Activated CD8-positive, alpha-beta T cell treated with anti-CD3 and anti-CD28 coated beads, Interleukin-2, amount 10 ng/mL, durations not matched to agents 7 days and 5 days (primary cell): ENCODE measurements at regions of chr1 and their contacts with region 1.

Region 1: GRCh38 chr1:40078512-40079333 is 18.3 kb downstream of the PPT1 start:
- DNase-seq: peak; percentile 75
- ATAC-seq: peak; percentile 83
- H3K4me3 Mint-ChIP-seq: no peak overlapping the region
- H3K27ac Mint-ChIP-seq: no peak overlapping the region
- H3K4me1 Mint-ChIP-seq: peaks cover 2% of the 10 kb centered on the region
- H3K27me3 Mint-ChIP-seq: no peaks in the 10 kb centered on the region

Region 2: GRCh38 chr1:40059338-40059959 is 19.3 kb before region 1 on chr1:
- CTCF ChIA-PET with region 1: interaction called, 32 read pairs
- POLR2A ChIA-PET with region 1: interaction called, 10 read pairs
- DNase-seq: peak; percentile 61
- ATAC-seq: peak; percentile 76
- H3K4me3 Mint-ChIP-seq: peak overlapping the region; percentile 67
- H3K27ac Mint-ChIP-seq: peak overlapping the region; percentile 90
- H3K4me1 Mint-ChIP-seq: peaks cover 87% of the 10 kb centered on the region
- H3K27me3 Mint-ChIP-seq: no peaks in the 10 kb centered on the region

Region 3: DNA sequence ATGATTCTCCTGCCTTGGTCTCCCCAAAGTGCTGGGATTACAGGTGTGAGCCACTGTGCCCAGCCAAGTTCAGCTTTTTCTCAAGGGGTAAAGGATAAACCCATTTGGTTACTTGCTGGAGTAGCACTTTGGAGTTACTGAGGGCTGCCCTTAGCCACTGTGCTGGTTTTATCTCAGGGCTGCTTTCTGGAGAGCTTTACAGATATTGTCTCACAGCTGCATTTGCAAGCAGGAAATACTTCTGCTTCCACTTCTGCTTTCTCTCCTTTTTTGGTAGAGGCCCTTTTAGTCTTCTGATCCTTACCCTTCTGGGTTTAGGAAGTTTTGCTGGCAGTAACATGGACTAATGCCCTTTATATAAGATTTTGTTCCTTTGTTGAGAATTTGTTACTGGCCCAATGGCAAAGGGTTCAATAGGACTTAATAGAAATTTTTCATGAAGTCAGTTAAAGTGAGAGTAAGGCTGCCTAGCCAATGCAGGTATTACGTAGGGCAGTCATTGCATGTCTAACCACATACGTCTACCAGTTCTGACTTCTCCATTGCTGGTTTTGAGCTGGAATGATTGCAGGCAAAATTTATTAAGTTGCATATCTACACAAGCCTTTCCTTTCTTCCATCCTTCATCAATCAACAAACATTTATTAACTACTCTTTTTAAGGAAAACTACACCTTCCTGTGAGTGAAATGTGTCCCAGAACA is 13.8 kb before region 1 on chr1:
- CTCF ChIA-PET with region 1: interaction called, 32 read pairs
- POLR2A ChIA-PET with region 1: interaction called, 10 read pairs
- DNase-seq: no peak
- ATAC-seq: no peak
- H3K4me3 Mint-ChIP-seq: peak overlapping the region; percentile 9
- H3K27ac Mint-ChIP-seq: peak overlapping the region; percentile 85
- H3K4me1 Mint-ChIP-seq: peaks cover 63% of the 10 kb centered on the region
- H3K27me3 Mint-ChIP-seq: no peaks in the 10 kb centered on the region

Region 4: DNA sequence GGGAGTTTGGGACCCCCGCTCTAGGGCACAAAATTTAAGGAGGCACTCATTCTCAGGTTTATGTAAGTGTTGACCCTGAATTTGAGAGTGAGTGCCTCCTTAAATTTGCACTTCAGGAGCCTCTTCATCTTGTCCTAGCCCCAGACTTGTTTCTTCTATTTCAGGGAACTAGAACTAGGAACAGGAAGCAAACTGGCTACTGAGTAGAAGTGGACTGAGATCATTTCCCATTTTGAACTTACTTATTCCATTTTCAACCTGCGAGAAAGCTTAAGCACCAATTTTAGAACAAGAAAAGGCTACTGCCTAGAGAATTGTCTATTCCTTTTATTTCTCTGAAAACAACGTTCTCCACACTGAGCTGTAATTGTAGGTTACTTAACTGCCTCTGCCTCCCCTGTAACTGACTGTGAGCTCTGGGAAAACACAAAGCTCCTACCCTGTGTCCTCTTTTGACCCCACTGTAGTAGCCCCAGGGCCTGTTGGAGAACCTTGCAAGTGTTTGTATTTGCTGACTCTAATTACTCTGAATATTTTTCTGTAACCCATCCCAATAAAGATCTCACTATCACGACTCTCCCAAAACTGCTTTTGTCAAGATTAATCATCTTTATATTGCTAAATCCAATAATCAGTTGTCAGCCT is 15.9 kb after region 1 on chr1:
- CTCF ChIA-PET with region 1: interaction called, 26 read pairs
- POLR2A ChIA-PET with region 1: no interaction called
- DNase-seq: no peak
- ATAC-seq: no peak
- H3K4me3 Mint-ChIP-seq: no peak overlapping the region
- H3K27ac Mint-ChIP-seq: no peak overlapping the region
- H3K4me1 Mint-ChIP-seq: peaks cover 35% of the 10 kb centered on the region
- H3K27me3 Mint-ChIP-seq: peaks cover 2% of the 10 kb centered on the region

Region 5: DNA sequence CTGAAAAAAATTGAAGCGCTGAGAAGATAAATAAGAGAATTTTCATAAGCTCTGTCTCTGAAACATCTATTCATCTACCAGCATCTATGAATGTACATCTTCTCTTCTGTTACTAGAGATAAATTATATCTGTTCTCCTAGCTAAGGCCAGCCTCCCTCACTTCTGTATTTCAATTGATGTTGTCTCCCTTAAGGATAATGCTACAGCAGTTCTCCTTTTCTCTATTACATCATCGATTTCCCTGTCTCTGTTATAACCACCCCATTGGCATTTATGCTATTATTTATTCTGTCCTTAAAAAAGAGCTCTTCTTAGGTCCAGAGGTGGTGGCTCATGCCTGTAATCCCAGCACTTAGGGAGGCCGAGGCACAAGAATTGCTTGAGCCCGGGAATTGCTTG is 126.1 kb after region 1 on chr1:
- CTCF ChIA-PET with region 1: no interaction called
- POLR2A ChIA-PET with region 1: no interaction called
- DNase-seq: no peak
- ATAC-seq: no peak
- H3K4me3 Mint-ChIP-seq: no peak overlapping the region
- H3K27ac Mint-ChIP-seq: no peak overlapping the region
- H3K4me1 Mint-ChIP-seq: peaks cover 3% of the 10 kb centered on the region
- H3K27me3 Mint-ChIP-seq: no peaks in the 10 kb centered on the region